ENCODE measurements at regions of chr6 and their contacts with region 1.

Region 1: GRCh38 chr6:124870611-124871459 is 91.4 kb upstream of the RNF217 start:
- DNase-seq: no peak
- H3K4me3 ChIP-seq: no peak overlapping the region
- H3K27ac ChIP-seq: no peak overlapping the region
- H3K4me1 ChIP-seq: no peaks in the 10 kb centered on the region
- H3K27me3 ChIP-seq: no peaks in the 10 kb centered on the region
- CTCF ChIP-seq: peak; percentile 92

Region 2: DNA sequence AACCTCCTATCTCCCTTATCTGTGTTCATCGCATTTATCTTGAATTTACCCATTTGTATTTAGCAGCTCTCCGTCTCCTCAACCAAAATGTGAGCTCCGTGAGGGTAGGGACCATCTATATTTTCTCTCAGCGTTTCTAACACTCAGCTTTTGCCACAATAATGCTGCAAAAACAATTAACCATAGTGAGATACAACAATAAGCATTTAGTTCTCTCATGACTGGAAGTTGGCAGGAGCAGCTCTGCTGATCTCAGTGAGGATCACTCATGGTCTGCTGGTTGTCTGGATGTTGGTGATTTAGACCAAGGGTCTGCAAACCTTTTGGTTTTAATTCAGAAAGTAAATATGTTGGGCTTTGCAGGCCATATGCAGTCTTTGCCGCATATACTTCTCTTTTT is 303.4 kb before region 1 on chr6:
- CTCF ChIA-PET with region 1: no interaction called
- POLR2A ChIA-PET with region 1: no interaction called
- intact Hi-C with region 1: no loop called
- DNase-seq: no peak
- H3K4me3 ChIP-seq: no peak overlapping the region
- H3K27ac ChIP-seq: no peak overlapping the region
- H3K4me1 ChIP-seq: no peaks in the 10 kb centered on the region
- H3K27me3 ChIP-seq: no peaks in the 10 kb centered on the region
- CTCF ChIP-seq: no peak

Region 3: GRCh38 chr6:124757560-124757959 is 113.3 kb before region 1 on chr6:
- CTCF ChIA-PET with region 1: no interaction called
- POLR2A ChIA-PET with region 1: no interaction called
- intact Hi-C with region 1: no loop called
- DNase-seq: no peak
- H3K4me3 ChIP-seq: no peak overlapping the region
- H3K27ac ChIP-seq: no peak overlapping the region
- H3K4me1 ChIP-seq: no peaks in the 10 kb centered on the region
- H3K27me3 ChIP-seq: no peaks in the 10 kb centered on the region
- CTCF ChIP-seq: no peak

Region 4: DNA sequence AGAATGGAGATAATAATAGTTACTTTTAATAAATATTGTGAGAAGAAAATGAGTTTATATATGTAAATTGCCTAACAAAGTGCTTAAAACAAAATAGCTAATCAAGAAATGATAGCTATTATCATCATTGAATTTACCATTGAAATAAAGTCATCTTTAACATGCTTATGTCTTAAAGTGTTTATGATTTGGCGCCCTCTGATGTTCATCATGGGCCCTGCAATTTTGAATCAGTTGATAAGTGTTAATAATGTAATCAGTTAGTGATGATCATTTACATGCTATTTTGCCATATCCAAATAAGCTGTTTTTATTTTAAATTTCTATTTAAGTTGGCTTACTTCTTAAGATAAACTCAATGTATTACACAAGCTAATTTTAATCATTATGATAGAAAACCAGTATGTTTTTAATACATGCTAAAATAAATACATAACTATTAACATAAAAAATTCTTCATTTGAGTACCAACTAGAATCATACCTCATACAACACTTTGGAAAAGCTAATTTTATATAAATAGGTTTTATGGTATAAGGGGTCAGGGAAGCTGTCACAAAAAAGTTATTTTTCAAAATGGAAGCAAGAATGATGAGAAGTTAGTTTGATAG is 243.5 kb after region 1 on chr6:
- CTCF ChIA-PET with region 1: interaction called, 4 read pairs
- POLR2A ChIA-PET with region 1: no interaction called
- intact Hi-C with region 1: loop called (anchors 1 kb)
- DNase-seq: peak; percentile 38 to 57
- H3K4me3 ChIP-seq: no peak overlapping the region
- H3K27ac ChIP-seq: no peak overlapping the region
- H3K4me1 ChIP-seq: no peaks in the 10 kb centered on the region
- H3K27me3 ChIP-seq: no peaks in the 10 kb centered on the region
- CTCF ChIP-seq: peak; percentile 98

Region 5: DNA sequence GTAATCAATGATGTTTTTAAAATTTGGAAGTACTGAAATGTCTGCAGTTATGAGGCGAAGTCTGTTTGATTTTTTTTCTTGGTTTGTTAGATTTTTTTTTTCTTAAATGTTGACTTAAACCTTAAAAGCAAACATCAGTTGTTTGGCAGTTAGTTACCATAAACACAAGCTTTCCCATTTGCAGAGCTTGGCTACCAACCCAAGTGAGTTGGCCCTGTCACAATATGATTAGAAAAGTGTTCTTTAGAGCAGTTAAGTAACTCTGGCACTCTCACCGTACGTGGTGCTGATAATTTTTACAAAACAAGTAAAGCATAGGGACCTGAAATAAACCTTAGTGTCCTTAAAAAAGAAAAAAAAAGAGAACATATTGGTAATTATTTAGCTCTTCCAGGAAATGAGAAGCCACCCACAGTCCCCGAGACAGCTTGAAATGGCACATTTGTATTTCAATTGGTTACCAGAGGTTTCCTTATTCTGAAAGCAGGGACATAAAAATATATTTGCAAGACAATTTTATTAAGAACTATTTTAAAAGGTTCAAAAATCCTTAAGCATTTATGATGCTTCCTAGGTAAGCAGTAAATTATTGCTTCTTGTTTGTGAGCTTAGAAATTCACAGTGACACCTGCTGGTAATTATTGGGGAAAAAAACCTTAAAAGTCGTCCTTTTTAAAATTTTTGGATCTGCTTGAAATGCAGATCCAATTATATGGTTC is 882.5 kb after region 1 on chr6:
- CTCF ChIA-PET with region 1: no interaction called
- POLR2A ChIA-PET with region 1: no interaction called
- intact Hi-C with region 1: loop called (anchors 5 kb)
- DNase-seq: no peak
- H3K4me3 ChIP-seq: no peak overlapping the region
- H3K27ac ChIP-seq: no peak overlapping the region
- H3K4me1 ChIP-seq: peaks cover 7% of the 10 kb centered on the region
- H3K27me3 ChIP-seq: peaks cover 4% of the 10 kb centered on the region; the same call in 1 of the 2 replicates
- CTCF ChIP-seq: peak; percentile 79

Region 6: DNA sequence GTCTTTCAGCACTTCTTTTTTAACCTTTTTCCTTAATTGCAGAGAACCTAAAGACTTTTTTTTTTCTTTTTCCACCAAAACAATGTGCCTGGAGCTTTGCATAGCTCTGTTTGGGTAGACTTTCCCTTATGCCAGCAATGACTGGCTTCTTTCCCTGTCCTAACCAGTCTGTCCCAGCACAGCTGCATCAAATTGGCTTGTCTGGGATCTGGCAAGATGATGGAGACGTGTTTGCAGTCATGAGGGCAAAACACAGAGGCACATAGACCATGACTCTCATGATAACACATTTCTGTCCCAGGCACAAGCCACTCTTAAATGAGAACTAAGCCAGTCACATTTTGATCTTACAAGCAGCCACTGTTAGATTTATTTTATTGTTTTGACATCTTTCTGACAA is 895.1 kb after region 1 on chr6:
- CTCF ChIA-PET with region 1: no interaction called
- POLR2A ChIA-PET with region 1: no interaction called
- intact Hi-C with region 1: loop called (anchors 5 kb)
- DNase-seq: no peak
- H3K4me3 ChIP-seq: no peak overlapping the region
- H3K27ac ChIP-seq: no peak overlapping the region
- H3K4me1 ChIP-seq: no peaks in the 10 kb centered on the region
- H3K27me3 ChIP-seq: no peaks in the 10 kb centered on the region
- CTCF ChIP-seq: no peak

Measured in PC-9 (cell line).